ENCODE measurements at regions of chr10 and their contacts with region 1.

Region 1: DNA sequence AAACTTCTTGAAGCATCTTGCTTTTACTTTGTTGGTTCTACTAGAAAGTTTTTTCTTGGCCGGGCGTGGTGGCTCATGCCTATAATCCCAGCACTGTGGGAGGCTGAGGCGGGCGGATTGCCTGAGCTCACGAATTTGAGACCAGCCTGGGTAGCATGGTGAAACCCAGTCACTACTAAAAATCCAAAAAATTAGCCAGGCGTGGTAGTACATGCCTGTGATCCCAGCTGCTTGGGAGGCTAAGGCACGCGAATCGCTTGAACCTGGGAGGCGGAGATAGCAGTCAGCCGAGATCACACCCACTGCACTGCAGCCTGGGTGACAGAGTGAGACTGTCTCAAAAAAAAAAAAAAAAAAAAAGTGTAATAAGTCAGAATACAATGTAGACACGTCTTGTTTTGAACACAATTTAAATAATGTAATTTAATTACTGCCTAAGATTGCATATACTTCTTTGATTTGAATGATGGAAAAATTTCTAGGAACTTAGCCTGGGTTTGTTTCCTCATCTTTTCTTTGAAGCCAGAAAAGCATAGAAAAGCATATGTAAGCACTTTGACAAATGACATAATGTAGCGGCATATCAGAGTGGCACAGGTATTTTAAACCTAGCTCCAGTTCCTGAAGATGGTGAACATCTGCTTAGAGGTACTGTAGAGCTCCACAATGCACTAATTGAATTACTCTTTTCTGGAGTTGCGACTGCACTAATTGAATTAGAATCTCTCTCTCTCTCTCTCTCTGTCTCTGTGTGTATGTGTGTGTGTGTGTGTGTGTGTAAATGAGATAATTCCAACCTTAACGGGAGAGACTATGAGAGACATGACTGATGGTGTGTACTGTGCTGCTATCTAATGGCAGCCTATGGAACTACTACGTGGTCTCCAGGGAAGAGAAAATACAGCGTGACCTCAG is 87.8 kb downstream of the BTRC start:
- DNase-seq: no peak

Region 2: GRCh38 chr10:101120884-101121653 is 320.7 kb before region 1 on chr10:
- intact Hi-C with region 1: no loop called
- DNase-seq: no peak

Region 3: DNA sequence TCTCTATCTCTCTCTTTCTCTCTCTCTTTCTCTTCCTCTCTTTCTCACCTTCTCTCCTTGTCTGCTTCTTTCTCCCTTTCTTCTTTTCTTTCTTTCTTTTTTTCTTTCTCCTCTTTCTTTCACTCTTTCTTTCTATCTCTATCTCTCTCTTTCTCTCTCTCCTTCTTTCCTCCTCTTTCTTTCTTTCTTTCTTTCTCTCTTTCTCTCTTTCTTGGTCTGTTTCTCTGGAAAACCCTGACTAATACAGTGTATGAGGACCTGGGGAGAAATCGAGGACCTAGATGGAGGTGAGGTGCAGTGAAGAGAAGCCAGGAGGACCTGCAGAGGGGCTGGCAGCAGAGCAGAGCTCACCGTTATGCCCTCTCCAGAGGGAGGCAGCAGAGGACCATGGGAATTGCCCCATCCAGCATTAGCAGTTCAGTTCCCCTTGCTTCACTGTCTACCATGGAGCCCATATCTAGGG is 140.5 kb before region 1 on chr10:
- intact Hi-C with region 1: loop called (anchors 5 kb)
- DNase-seq: no peak

Region 4: DNA sequence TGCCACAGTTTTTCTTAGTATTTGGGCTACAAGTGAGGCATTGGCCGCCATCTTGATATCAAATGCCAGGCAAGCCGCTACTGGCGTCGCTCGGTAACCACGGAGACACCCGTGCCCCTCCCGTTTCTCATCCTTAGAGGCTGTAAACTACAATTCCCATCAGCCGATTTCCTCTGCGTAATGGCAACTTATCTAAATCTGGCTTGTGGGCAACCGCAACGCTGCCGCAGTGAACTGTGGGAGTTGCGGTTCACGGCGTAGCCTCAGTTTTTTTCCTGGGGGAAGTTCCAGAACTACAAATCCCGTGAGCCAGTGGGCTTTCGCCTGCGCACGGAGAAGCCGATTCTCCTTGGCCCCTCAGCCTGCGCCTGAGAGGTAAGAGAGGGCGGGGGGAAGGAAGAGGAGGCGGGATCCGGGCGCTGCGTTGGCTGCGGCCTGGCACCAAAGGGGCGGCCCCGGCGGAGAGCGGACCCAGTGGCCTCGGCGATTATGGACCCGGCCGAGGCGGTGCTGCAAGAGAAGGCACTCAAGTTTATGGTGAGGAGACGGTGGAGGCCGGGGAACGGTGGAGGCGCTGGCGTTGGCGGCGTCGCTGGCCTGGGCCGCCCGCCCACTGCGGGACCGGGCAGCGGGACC is 88.0 kb before region 1 on chr10 and contains the start of gene BTRC:
- intact Hi-C with region 1: loop called (anchors 10 kb)
- DNase-seq: peak; percentile 98
- total RNA-seq, gene BTRC: 34.7 TPM